Motor neuron (in vitro differentiated cells): ENCODE measurements at regions of chr3 and their contacts with region 1.

Region 1: GRCh38 chr3:117355566-117355965 is 646.0 kb downstream of the TUSC7 start:
- ATAC-seq: peak; percentile 52 to 93 (median 72)
- H3K4me3 ChIP-seq: no peak overlapping the region
- H3K27ac ChIP-seq: no peak overlapping the region
- H3K4me1 ChIP-seq: peaks cover 5 to 27% of the 10 kb centered on the region in 2 donors

Region 2: DNA sequence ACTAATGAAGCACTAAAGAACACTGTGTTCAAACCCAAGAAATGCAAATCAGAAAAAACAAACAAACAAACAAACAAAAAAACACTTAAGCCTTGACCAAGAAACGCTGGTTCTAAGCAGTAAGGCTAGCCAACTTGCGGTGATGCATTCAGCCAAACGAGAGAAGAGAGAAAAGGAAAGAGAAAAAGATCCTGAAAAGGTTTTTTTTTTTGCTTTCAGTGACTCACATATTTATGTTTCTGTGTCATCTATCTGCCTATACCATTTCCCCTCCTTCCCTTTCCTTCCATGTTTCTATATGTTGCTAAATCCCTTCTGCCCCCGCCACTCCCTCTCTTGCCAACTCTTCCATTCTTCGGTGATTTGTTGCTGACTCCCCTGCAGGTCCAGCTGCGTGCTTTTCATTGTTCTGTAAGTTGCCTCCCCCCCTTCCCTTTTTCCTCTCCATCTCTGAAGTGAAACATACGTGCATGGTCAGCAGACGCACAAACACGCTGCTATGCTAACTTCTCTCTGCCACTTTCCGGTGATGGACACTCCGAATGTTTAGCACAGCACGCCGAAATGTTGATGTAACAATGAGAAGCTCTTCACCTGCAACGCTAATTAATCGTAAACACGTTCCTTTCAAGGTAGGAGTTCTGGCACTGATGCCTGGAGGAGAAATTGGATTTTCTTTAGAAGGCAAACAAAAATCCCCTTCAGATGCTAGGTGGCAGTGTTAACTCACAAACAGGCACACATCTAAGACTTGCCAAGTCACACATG is 491.6 kb before region 1 on chr3:
- in situ Hi-C with region 1: loop called in 1 of 9 experiments (anchors 25 kb)
- ATAC-seq: peak; percentile 72 to 84 (median 80)
- H3K4me3 ChIP-seq: peak overlapping the region; percentile 20 to 36 (median 23)
- H3K27ac ChIP-seq: no peak overlapping the region
- H3K4me1 ChIP-seq: peaks cover 13 to 31% of the 10 kb centered on the region in 2 donors

Region 3: DNA sequence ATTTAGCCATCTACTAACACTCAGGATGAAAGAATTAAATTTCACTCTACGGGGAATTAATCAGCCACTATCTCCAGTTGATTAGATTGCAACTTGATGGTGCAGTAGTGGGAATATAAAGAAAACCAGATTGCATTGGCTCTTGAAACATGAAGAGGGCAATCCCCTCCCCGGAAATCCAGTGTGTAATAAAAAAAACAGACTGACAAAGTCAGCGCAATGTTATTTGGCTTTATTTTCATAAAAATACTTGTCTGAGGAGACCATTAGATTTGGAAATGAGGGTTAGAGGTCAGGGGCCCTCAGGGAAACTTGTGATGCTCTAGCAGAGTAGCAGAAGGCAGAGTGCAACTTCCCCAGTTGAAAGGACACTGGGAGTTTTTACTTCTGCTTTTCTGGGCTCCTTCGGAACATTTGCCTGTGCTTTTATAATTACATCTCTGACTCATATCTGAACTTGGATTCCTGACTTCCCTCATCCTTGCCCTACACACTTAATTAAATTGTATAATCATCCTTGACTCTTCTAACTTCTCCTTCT is 319.2 kb before region 1 on chr3:
- in situ Hi-C with region 1: loop called in 1 of 9 experiments (anchors 25 kb)
- ATAC-seq: peak in 4 of 8 experiments; percentile 42 to 73 (median 62)
- H3K4me3 ChIP-seq: no peak overlapping the region
- H3K27ac ChIP-seq: no peak overlapping the region
- H3K4me1 ChIP-seq: peaks cover 18% of the 10 kb centered on the region in 2 donors